Ascending aorta (tissue), 2 donors: ENCODE measurements at regions of chrX and their contacts with region 1.

Region 1: DNA sequence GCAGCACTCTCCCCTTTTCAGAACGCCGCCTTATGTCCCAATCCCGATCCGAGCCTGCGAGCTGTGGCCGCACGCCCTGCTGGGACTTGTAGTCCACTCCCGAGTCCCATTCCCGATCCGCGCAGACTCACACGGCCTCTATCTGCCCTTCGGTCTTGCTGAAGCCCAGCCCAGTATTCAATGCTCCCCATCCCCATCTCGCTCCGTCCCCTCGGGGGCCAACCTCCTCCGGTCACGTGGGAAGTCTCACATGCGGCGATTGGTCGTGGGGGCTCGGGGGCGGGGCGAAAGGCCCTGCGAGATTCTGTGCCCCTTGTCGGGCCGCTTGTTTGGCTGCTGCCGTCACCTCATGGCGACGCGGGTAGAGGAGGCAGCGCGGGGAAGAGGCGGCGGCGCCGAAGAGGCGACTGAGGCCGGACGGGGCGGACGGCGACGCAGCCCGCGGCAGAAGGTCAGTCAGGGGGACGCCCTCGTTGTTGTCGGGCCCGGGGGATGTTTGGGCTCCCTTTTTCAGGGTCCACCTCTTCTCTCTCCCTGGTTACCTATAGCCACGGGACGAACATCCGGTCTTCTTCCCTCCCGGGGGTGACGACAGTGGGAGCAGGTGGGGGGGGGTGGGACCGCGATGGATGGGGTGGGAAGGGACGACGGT is at the start of gene TXLNG:
- DNase-seq: peak; percentile 99 to 100
- H3K4me3 ChIP-seq: peak within 1 kb of the TSS; percentile 87 to 89
- H3K27ac ChIP-seq: peak within 1 kb of the TSS; percentile 88 to 90
- H3K4me1 ChIP-seq: peaks cover 0 to 11% of the 10 kb centered on the region in 2 donors
- H3K27me3 ChIP-seq: no peaks in the 10 kb centered on the region
- CTCF ChIP-seq: no peak
- total RNA-seq, gene TXLNG: 3.9 TPM

Region 2: DNA sequence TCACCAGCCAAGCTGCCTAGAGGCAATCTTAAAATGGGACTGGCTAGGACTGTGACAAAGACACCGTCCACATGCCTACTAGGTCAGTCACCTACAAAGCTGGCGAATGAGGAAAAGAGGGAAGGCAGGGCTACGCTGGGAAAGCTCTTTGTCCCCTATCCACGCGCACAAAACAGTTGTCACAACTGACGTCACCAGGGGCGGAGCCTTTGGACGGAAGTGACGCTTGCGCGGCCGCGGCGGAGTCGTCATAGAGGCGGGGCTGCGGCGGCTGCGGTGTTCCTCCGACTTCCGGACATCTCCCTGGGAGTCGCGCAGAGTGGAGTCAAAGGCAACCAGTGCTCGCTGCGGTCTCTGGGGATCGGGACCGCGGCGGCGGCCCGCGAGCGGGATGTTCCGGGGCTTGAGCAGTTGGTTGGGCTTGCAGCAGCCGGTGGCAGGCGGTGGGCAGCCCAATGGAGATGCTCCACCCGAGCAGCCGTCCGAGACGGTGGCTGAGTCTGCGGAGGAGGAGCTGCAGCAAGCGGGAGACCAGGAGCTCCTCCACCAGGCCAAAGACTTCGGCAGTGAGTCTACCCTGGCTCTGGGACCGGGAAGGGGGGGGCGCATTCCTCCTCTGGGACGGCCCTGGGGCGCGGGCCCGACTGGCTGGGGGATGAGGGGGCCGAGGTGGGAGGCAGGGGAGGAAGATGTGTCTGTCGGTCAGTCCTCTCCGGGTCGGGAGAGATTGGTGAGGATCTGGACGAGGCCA is 66.8 kb before region 1 on chrX and contains the start of gene SYAP1:
- intact Hi-C with region 1: loop called (anchors 1 kb)
- DNase-seq: peak; percentile 94 to 99
- H3K4me3 ChIP-seq: peak within 1 kb of the TSS; percentile 86 to 93
- H3K27ac ChIP-seq: peak within 1 kb of the TSS; percentile 93 to 98
- H3K4me1 ChIP-seq: peaks cover 0 to 16% of the 10 kb centered on the region in 2 donors
- H3K27me3 ChIP-seq: no peaks in the 10 kb centered on the region
- CTCF ChIP-seq: no peak
- total RNA-seq, gene SYAP1: 14.2 TPM

Region 3: DNA sequence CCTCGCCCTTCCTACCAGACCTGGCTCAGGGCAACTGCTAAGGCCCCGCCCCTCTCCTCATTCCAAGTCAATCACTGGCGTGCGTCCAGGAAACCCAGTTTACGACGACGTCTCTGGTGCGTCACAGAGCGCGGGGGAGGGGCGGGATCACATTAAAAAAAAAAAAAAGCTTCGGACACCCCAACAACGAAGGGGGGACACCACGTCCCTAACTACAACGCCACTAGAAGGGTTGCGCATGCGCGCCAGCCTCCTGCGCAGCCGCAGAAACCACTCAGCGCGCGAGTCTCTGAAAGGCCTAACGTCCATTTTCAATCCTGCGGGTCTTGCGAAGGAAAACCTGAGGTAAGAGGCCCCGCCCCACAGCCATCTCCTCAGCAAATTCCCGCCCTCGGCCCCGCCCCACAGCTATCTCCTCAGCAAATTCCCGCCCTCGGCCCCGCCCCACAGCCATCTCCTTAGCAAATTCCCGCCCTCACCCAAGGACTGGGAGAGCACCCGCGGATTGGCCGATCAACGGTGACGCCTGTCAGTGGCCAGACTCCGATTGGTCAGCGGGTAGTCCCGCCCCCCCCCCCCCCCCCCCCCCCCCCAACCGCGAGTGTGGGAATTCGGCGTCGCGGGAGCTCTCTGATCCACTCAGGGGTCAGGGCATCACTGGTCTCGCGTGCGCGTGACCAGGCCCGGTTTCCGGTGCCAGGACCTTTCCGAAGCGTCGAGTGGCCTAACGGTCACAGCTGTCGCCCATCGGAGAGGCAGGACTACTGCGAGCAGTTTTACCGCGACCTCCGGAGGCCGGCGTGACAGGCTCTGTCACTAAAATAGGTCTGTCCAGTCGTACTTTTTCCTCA is 950.8 kb after region 1 on chrX and contains the start of gene SCML1:
- intact Hi-C with region 1: loop called (anchors 5 kb)
- DNase-seq: peak; percentile 88 to 98
- H3K4me3 ChIP-seq: peak within 1 kb of the TSS; percentile 55 to 69
- H3K27ac ChIP-seq: peak within 1 kb of the TSS; percentile 92 to 95
- H3K4me1 ChIP-seq: peaks cover 0 to 3% of the 10 kb centered on the region in 2 donors
- H3K27me3 ChIP-seq: no peaks in the 10 kb centered on the region
- CTCF ChIP-seq: no peak
- total RNA-seq, gene SCML1: 5.7 TPM